ENCODE measurements at regions of chr6 and their contacts with region 1.

Region 1: DNA sequence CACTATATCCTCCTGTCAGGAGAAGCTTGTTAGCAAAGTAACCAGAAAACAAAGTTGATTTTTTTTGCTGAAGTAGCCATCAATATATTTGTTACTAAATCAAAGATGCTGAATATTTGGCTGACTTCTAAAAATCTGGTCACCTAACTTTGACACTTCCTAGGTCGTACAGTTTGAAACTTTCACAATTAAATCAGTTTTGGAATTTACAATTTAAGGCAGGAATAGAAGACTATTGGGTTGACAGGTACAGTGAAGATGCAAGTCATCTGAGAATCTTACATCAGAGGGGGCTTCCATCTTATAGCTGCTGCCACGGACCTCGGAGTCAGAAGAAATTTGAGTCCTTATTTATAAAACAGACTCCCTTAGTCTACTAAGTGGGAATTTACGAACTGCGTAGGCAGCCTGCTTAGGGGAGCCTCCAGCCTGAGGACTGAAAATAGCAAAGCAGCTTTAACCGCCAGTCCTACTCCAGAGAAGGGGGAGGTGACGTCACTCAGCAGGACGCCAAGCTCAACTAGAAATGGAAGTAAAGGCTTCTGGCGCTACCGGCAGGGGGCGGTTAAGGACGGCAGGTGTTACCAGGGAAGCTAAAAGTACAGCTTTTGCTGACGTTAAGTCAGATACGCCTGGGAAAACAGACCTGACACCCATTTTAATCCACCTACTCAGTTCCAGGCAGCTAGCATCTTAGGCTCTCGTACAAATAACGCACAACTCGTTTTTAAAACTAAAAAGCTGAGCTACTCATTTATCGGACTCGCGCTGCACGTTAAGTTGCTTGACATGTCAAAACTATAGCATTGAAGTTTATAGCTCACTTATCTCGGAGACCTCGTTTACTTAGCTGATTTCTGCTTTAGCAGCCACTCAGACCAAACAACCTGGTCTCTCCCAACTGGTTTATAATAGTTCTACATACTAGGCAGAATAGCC is 61.1 kb upstream of the HFE start:
- DNase-seq: peak; percentile 74 to 99 (median 89)
- ATAC-seq: peak; percentile 43
- H3K4me3 ChIP-seq: peak overlapping the region; percentile 50 to 76
- H3K4me3 Mint-ChIP-seq: peak overlapping the region; percentile 86
- H3K27ac ChIP-seq: peak overlapping the region; percentile 93 to 96
- H3K27ac Mint-ChIP-seq: peak overlapping the region; percentile 98
- H3K4me1 ChIP-seq: peaks cover 25% of the 10 kb centered on the region
- H3K4me1 Mint-ChIP-seq: peaks cover 48% of the 10 kb centered on the region
- H3K27me3 ChIP-seq: no peaks in the 10 kb centered on the region
- H3K27me3 Mint-ChIP-seq: no peaks in the 10 kb centered on the region
- CTCF ChIP-seq: peak; percentile 80

Region 2: GRCh38 chr6:26012061-26012460 is 14.1 kb before region 1 on chr6:
- CTCF ChIA-PET with region 1: interaction called, 17 read pairs
- POLR2A ChIA-PET with region 1: interaction called, 248 read pairs
- intact Hi-C with region 1: no loop called
- DNase-seq: no peak
- ATAC-seq: no peak
- H3K4me3 ChIP-seq: no peak overlapping the region
- H3K4me3 Mint-ChIP-seq: no peak overlapping the region
- H3K27ac ChIP-seq: no peak overlapping the region
- H3K27ac Mint-ChIP-seq: no peak overlapping the region
- H3K4me1 ChIP-seq: no peaks in the 10 kb centered on the region
- H3K4me1 Mint-ChIP-seq: peaks cover under 1% of the 10 kb centered on the region
- H3K27me3 ChIP-seq: no peaks in the 10 kb centered on the region
- H3K27me3 Mint-ChIP-seq: no peaks in the 10 kb centered on the region
- CTCF ChIP-seq: no peak

Region 3: GRCh38 chr6:26097268-26097875 is 71.2 kb after region 1 on chr6:
- CTCF ChIA-PET with region 1: interaction called, 22 read pairs
- POLR2A ChIA-PET with region 1: interaction called, 27 read pairs
- intact Hi-C with region 1: no loop called
- DNase-seq: peak; percentile 22 to 84 (median 71)
- ATAC-seq: peak; percentile 84
- H3K4me3 ChIP-seq: no peak overlapping the region
- H3K4me3 Mint-ChIP-seq: no peak overlapping the region
- H3K27ac ChIP-seq: no peak overlapping the region
- H3K27ac Mint-ChIP-seq: no peak overlapping the region
- H3K4me1 ChIP-seq: no peaks in the 10 kb centered on the region
- H3K4me1 Mint-ChIP-seq: peaks cover 5% of the 10 kb centered on the region
- H3K27me3 ChIP-seq: no peaks in the 10 kb centered on the region
- H3K27me3 Mint-ChIP-seq: no peaks in the 10 kb centered on the region
- CTCF ChIP-seq: peak; percentile 91

Region 4: DNA sequence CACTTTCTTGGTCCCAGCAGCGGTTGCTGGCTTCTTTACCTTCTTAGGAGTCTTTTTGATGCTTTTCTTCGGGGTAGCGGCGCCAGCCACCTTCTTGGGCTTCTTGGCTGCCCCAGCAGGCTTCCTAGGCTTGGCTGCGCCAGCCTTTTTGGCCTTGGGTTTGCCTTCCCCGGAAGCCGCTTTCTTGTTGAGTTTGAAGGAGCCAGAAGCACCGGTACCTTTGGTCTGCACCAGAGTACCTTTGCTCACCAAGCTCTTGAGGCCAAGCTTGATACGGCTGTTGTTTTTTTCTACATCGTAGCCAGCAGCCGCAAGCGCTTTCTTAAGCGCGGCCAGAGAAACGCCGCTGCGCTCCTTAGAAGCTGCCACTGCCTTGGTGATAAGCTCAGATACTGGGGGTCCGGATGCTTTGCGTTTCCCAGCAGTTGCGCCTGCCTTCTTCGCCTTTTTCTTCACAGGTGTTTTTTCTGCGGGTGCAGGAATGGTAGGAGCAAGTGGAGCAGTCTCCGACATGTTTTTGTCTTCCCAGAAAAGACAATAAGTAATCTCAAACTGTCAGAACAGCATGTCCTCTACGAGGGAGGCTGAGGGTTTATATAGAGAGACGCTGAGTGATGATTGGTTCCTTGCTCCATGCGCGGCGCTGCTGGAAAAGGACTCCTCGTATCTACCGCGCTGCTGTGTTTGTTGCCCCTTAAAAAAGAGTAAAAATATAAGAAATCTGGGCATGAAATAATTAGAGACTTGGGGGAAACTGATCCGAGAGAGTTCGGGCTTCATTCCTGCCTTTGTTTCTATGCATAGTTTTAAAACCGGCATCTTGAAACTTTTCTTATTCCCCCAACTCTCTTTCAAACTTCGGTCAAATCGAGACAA is 208.5 kb after region 1 on chr6:
- CTCF ChIA-PET with region 1: interaction called, 3 read pairs
- POLR2A ChIA-PET with region 1: interaction called, 34 read pairs
- intact Hi-C with region 1: no loop called
- DNase-seq: peak; percentile 55 to 88 (median 66)
- ATAC-seq: peak; percentile 63
- H3K4me3 ChIP-seq: peak overlapping the region; percentile 66 to 76
- H3K4me3 Mint-ChIP-seq: peak overlapping the region; percentile 85
- H3K27ac ChIP-seq: peak overlapping the region; percentile 84 to 92
- H3K27ac Mint-ChIP-seq: peak overlapping the region; percentile 93
- H3K4me1 ChIP-seq: peaks cover 14% of the 10 kb centered on the region
- H3K4me1 Mint-ChIP-seq: peaks cover 31% of the 10 kb centered on the region
- H3K27me3 ChIP-seq: no peaks in the 10 kb centered on the region
- H3K27me3 Mint-ChIP-seq: no peaks in the 10 kb centered on the region
- CTCF ChIP-seq: no peak

Region 5: GRCh38 chr6:27146706-27147505 is 1120.7 kb after region 1 on chr6:
- CTCF ChIA-PET with region 1: no interaction called
- POLR2A ChIA-PET with region 1: interaction called, 20 read pairs
- intact Hi-C with region 1: loop called in 1 of 2 experiments (anchors 5 kb)
- DNase-seq: peak; percentile 56 to 98 (median 74)
- ATAC-seq: peak; percentile 85
- H3K4me3 ChIP-seq: peak overlapping the region; percentile 71 to 77
- H3K4me3 Mint-ChIP-seq: no peak overlapping the region
- H3K27ac ChIP-seq: peak overlapping the region; percentile 84 to 91
- H3K27ac Mint-ChIP-seq: no peak overlapping the region
- H3K4me1 ChIP-seq: peaks cover 11% of the 10 kb centered on the region
- H3K4me1 Mint-ChIP-seq: peaks cover 13% of the 10 kb centered on the region
- H3K27me3 ChIP-seq: no peaks in the 10 kb centered on the region
- H3K27me3 Mint-ChIP-seq: no peaks in the 10 kb centered on the region
- CTCF ChIP-seq: no peak

Region 6: DNA sequence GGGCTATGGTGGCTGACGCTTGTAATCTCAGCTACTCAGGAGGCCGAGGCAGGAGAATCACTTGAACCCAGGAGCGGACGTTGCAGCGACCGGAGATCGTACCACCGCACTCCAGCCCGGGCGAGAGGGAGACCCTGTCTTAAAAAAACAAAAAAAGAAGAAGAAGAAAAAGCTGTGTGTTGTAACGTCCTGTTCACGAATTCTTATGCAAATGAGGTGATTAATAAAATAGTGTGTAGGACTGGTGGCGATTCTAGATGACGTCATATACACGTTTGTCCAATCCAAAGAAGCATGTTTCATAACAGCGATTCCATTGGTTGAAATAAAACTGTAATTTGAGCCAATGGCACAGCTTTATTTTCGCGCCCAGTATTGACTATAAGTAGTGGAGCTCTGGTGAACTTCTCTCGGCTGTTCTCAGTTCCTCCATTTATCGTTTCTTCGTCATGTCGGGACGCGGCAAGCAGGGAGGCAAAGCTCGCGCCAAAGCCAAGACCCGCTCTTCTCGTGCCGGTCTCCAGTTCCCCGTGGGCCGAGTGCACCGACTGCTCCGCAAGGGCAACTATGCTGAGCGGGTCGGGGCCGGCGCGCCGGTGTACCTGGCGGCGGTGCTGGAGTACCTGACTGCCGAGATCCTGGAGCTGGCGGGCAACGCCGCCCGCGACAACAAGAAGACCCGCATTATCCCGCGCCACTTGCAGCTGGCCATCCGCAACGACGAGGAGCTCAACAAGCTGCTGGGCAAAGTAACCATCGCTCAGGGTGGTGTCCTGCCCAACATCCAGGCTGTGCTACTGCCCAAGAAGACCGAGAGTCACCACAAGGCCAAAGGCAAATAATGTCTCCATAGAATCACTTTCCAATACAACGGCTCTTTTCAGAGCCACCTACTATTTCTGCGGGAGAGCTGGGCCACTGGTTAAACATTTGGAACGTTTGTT is 1839.0 kb after region 1 on chr6:
- CTCF ChIA-PET with region 1: no interaction called
- POLR2A ChIA-PET with region 1: interaction called, 22 read pairs
- intact Hi-C with region 1: no loop called
- DNase-seq: peak; percentile 37 to 97 (median 56)
- ATAC-seq: peak; percentile 83
- H3K4me3 ChIP-seq: peak overlapping the region; percentile 71 to 79
- H3K4me3 Mint-ChIP-seq: peak overlapping the region; percentile 95
- H3K27ac ChIP-seq: peak overlapping the region; percentile 67 to 83
- H3K27ac Mint-ChIP-seq: peak overlapping the region; percentile 94
- H3K4me1 ChIP-seq: peaks cover 17% of the 10 kb centered on the region
- H3K4me1 Mint-ChIP-seq: peaks cover 38% of the 10 kb centered on the region
- H3K27me3 ChIP-seq: no peaks in the 10 kb centered on the region
- H3K27me3 Mint-ChIP-seq: no peaks in the 10 kb centered on the region
- CTCF ChIP-seq: no peak

Measured in CD8-positive, alpha-beta T cell (primary cell).